HCT116 (cell line): ENCODE measurements at regions of chr10 and their contacts with region 1.

Region 1: DNA sequence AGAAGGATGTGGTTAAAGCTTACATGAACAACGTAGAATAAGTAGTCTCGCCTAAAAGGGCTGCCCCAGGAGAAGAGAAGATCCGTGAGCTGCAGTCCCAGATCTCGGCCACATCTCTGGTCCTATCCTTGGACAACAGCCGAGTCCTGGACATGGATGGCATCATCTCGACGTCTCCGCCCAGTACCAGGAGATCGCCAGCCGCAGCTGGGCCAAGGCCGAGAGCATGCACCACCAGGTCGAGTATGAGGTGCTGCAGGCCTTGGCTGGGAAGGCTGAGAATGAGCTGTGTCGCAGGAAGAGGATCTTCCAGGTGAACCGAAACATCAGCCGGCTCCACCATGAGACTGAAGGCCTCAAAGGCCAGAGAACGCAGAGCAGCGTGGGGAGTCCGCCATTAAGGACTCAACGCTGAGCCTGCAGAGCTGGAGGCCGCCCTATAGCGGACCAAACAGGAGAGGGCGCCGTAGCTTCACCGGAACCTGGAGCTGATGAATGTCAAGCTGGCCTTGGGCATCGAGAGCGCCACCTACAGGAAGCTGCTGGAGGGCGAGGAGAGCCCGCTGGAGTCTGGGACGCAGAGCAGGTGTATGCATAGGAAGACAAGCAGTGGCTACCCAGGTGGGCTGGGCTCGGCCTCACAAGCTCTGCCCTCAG is 22.2 kb downstream of the LIPK start:
- DNase-seq: peak; percentile 54
- ATAC-seq: peak; percentile 92
- H3K4me3 ChIP-seq: no peak overlapping the region
- H3K27ac ChIP-seq: no peak overlapping the region
- H3K4me1 ChIP-seq: no peaks in the 10 kb centered on the region
- H3K27me3 ChIP-seq: no peaks in the 10 kb centered on the region
- CTCF ChIP-seq: peak; percentile 80 to 97 (median 83)
- POLR2A ChIP-seq: no peak
- RAD21 ChIP-seq: peak; percentile 65

Region 2: GRCh38 chr10:88598055-88598454 is 130.2 kb before region 1 on chr10:
- CTCF ChIA-PET with region 1: no interaction called
- POLR2A ChIA-PET with region 1: no interaction called
- RAD21 ChIA-PET with region 1: no interaction called
- intact Hi-C with region 1: no loop called
- DNase-seq: no peak
- ATAC-seq: no peak
- H3K4me3 ChIP-seq: no peak overlapping the region
- H3K27ac ChIP-seq: no peak overlapping the region
- H3K4me1 ChIP-seq: no peaks in the 10 kb centered on the region; a peak in 1 of 4 replicates
- H3K27me3 ChIP-seq: no peaks in the 10 kb centered on the region
- CTCF ChIP-seq: no peak
- POLR2A ChIP-seq: no peak
- RAD21 ChIP-seq: no peak

Region 3: GRCh38 chr10:88707429-88708285 is 20.6 kb before region 1 on chr10:
- CTCF ChIA-PET with region 1: interaction called, 11 read pairs
- POLR2A ChIA-PET with region 1: no interaction called
- RAD21 ChIA-PET with region 1: no interaction called
- intact Hi-C with region 1: no loop called
- DNase-seq: peak; percentile 69
- ATAC-seq: peak; percentile 77
- H3K4me3 ChIP-seq: peak overlapping the region in 1 of 2 experiments; percentile 16; a peak in 1 of 4 replicates
- H3K27ac ChIP-seq: no peak overlapping the region
- H3K4me1 ChIP-seq: peaks cover 24 to 39% of the 10 kb centered on the region in 2 experiments
- H3K27me3 ChIP-seq: no peaks in the 10 kb centered on the region
- CTCF ChIP-seq: no peak
- POLR2A ChIP-seq: no peak
- RAD21 ChIP-seq: peak; percentile 20; the same call in 1 of the 2 replicates

Region 4: DNA sequence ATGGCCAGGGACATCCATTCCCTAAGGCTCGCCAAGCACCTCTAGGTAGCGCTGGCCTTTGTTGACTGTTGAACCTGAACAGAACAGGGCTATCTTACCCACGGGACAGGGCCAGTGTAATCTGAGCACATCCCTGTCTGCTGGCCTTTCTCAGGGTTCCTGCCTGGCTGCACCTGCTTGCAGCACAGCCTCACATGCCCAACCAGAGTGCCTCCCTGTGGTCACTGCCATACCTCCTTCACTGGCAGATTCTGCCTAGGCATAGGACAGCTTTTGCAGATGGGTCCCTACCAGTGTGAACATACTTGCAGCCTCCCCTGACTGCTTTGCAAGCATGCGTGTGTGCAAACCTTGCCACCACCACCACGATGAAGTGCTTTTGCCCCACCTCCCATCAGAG is 15.8 kb after region 1 on chr10:
- CTCF ChIA-PET with region 1: interaction called, 12 read pairs
- POLR2A ChIA-PET with region 1: no interaction called
- RAD21 ChIA-PET with region 1: no interaction called
- intact Hi-C with region 1: no loop called
- DNase-seq: no peak
- ATAC-seq: peak; percentile 69
- H3K4me3 ChIP-seq: no peak overlapping the region
- H3K27ac ChIP-seq: no peak overlapping the region
- H3K4me1 ChIP-seq: no peaks in the 10 kb centered on the region
- H3K27me3 ChIP-seq: no peaks in the 10 kb centered on the region
- CTCF ChIP-seq: peak in 2 of 3 experiments; percentile 25 to 29; a peak in 2 of 6 replicates
- POLR2A ChIP-seq: no peak
- RAD21 ChIP-seq: peak; percentile 52